Natural killer cell (primary cell): ENCODE measurements at regions of chr16 and their contacts with region 1.

Region 1: GRCh38 chr16:17578921-17579874 is 108.4 kb upstream of the XYLT1 start:
- DNase-seq: peak; percentile 29 to 84
- ATAC-seq: peak; percentile 68 to 89 (median 76)
- H3K4me3 ChIP-seq: no peak overlapping the region
- H3K4me3 Mint-ChIP-seq: no peak overlapping the region
- H3K27ac ChIP-seq: no peak overlapping the region
- H3K27ac Mint-ChIP-seq: peak overlapping the region in 1 of 2 donors; percentile 27
- H3K4me1 ChIP-seq: no peaks in the 10 kb centered on the region
- H3K4me1 Mint-ChIP-seq: peaks cover 5% of the 10 kb centered on the region in 2 donors
- H3K27me3 ChIP-seq: no peaks in the 10 kb centered on the region
- H3K27me3 Mint-ChIP-seq: peaks cover 13 to 44% of the 10 kb centered on the region in 2 donors
- CTCF ChIP-seq: peak; percentile 91

Region 2: GRCh38 chr16:16861546-16861945 is 717.7 kb before region 1 on chr16:
- intact Hi-C with region 1: loop called (anchors 1 kb)
- DNase-seq: peak; percentile 30 to 74
- ATAC-seq: peak; percentile 37 to 60 (median 40)
- H3K4me3 ChIP-seq: no peak overlapping the region
- H3K4me3 Mint-ChIP-seq: no peak overlapping the region
- H3K27ac ChIP-seq: no peak overlapping the region
- H3K27ac Mint-ChIP-seq: no peak overlapping the region
- H3K4me1 ChIP-seq: no peaks in the 10 kb centered on the region
- H3K4me1 Mint-ChIP-seq: no peaks in the 10 kb centered on the region
- H3K27me3 ChIP-seq: no peaks in the 10 kb centered on the region
- H3K27me3 Mint-ChIP-seq: peaks cover 7 to 16% of the 10 kb centered on the region in 2 donors
- CTCF ChIP-seq: peak; percentile 66

Region 3: DNA sequence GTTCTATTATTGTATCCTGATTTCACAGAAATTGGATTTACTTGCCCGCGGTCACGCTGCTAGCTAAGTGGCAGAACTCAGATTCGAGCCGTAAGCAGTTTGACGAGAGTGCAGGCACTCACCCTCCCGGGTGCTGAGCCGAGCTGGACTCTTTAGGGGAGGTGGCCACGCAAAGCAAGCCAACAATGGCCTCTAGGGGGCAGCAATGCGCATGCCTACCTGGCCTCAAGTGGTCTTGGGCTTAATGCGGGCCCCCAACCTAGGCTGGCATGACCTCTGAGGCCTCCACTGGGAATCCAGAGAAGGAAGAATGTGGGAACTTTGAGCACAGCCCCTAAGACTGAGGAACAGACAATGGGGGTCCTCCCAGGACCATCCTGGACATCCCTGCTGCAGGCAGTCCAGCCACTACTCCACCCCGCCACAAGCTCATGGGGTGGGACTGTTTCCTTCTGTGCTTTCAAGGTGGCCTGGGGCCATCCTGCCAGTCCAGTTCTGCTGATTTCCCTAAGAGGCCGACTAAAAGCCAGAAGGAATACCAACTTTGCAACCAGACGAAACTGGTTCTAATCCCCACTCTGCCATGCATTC is 384.9 kb before region 1 on chr16:
- intact Hi-C with region 1: loop called (anchors 1 kb)
- DNase-seq: peak; percentile 57 to 79
- ATAC-seq: peak; percentile 71 to 83 (median 72)
- H3K4me3 ChIP-seq: no peak overlapping the region
- H3K4me3 Mint-ChIP-seq: no peak overlapping the region
- H3K27ac ChIP-seq: no peak overlapping the region
- H3K27ac Mint-ChIP-seq: no peak overlapping the region
- H3K4me1 ChIP-seq: peaks cover 6% of the 10 kb centered on the region
- H3K4me1 Mint-ChIP-seq: peaks cover 12 to 13% of the 10 kb centered on the region in 2 donors
- H3K27me3 ChIP-seq: no peaks in the 10 kb centered on the region
- H3K27me3 Mint-ChIP-seq: no peaks in the 10 kb centered on the region
- CTCF ChIP-seq: peak; percentile 87

Region 4: DNA sequence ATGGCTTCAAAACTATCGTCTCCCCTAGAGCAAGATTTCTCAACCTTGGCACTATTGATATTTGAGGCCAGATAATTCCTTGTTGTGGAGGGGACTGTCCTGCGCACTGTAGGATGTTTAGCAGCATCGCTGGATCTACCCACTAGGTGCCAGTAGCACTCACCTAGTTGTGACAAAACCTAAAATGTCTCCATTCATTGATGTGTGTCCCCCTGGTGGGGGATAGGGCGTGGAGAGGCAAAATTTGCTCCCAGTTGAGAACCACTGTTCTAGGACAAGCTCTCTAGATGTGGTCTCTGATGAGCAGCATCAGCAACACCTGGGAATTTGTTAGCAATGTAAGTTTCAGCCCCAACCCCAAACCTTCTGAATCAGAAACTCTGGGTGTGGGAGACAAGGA is 367.4 kb before region 1 on chr16:
- intact Hi-C with region 1: loop called (anchors 5 kb)
- DNase-seq: peak in 1 of 2 donors; percentile 63
- ATAC-seq: peak; percentile 50 to 77 (median 77)
- H3K4me3 ChIP-seq: no peak overlapping the region
- H3K4me3 Mint-ChIP-seq: no peak overlapping the region
- H3K27ac ChIP-seq: no peak overlapping the region
- H3K27ac Mint-ChIP-seq: no peak overlapping the region
- H3K4me1 ChIP-seq: no peaks in the 10 kb centered on the region
- H3K4me1 Mint-ChIP-seq: peaks cover 6 to 9% of the 10 kb centered on the region in 2 donors
- H3K27me3 ChIP-seq: no peaks in the 10 kb centered on the region
- H3K27me3 Mint-ChIP-seq: no peaks in the 10 kb centered on the region
- CTCF ChIP-seq: peak; percentile 18